Heart right ventricle (tissue), 16 donors: ENCODE measurements at regions of chr2 and their contacts with region 1.

Region 1: DNA sequence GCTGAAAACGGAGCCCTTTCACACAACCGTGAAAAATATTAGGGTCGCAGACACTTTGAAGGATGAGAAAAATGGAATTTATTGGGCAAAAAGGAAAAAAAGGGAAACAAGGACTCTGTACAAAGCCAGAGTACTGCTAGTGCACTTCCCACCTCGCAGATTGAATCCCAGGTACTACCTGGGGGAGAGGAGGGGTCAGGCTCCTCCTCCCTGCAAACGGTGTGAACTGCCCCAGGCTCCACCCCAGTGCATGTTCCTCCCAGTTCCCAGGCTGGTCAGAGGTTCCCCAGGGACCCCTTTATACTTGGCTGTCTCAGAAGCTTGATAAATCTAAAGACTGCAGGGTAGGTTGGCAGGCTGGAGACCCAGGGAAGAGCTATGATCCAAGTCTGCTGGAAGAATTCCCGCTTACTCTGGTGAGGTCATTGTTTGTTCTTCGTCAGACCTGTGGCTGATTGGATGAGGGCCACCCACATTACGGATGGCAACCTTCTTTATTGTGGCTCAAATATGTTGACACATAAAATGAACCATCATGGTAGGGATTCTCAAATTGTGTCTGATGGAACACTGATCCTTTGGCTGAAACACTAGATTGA is 290.4 kb upstream of the POU3F3 start:
- DNase-seq: no peak
- ATAC-seq: no peak
- H3K4me3 ChIP-seq: no peak overlapping the region
- H3K27ac ChIP-seq: no peak overlapping the region
- H3K4me1 ChIP-seq: no peaks in the 10 kb centered on the region
- H3K27me3 ChIP-seq: peaks cover 0 to 9% (median 0%) of the 10 kb centered on the region in 7 donors
- CTCF ChIP-seq: no peak

Region 2: GRCh38 chr2:102940684-102941083 is 1622.8 kb before region 1 on chr2:
- intact Hi-C with region 1: loop called in 1 of 10 experiments (anchors 5 kb)
- DNase-seq: no peak
- ATAC-seq: peak in 3 of 8 donors; percentile 42 to 61 (median 46)
- H3K4me3 ChIP-seq: no peak overlapping the region
- H3K27ac ChIP-seq: no peak overlapping the region
- H3K4me1 ChIP-seq: no peaks in the 10 kb centered on the region
- H3K27me3 ChIP-seq: peaks cover 0 to 2% (median 0%) of the 10 kb centered on the region in 7 donors
- CTCF ChIP-seq: no peak

Region 3: GRCh38 chr2:104538077-104538476 is 25.4 kb before region 1 on chr2:
- intact Hi-C with region 1: no loop called
- DNase-seq: no peak
- ATAC-seq: no peak
- H3K4me3 ChIP-seq: no peak overlapping the region
- H3K27ac ChIP-seq: no peak overlapping the region
- H3K4me1 ChIP-seq: no peaks in the 10 kb centered on the region
- H3K27me3 ChIP-seq: no peaks in the 10 kb centered on the region
- CTCF ChIP-seq: no peak

Region 4: GRCh38 chr2:104769096-104769495 is 205.6 kb after region 1 on chr2:
- intact Hi-C with region 1: loop called in 1 of 10 experiments (anchors 1 kb)
- DNase-seq: no peak
- ATAC-seq: no peak
- H3K4me3 ChIP-seq: no peak overlapping the region
- H3K27ac ChIP-seq: no peak overlapping the region
- H3K4me1 ChIP-seq: peaks cover 0 to 8% (median 0%) of the 10 kb centered on the region in 9 donors
- H3K27me3 ChIP-seq: peaks cover 0 to 2% (median 0%) of the 10 kb centered on the region in 7 donors
- CTCF ChIP-seq: no peak